Mammary epithelial cell (primary cell): ENCODE measurements at regions of chr6 and their contacts with region 1.

Region 1: GRCh38 chr6:17281100-17281494 is at the start of gene RBM24:
- DNase-seq: peak; percentile 44
- H3K4me3 ChIP-seq: peak within 1 kb of the TSS; percentile 61 to 76 (median 64)
- H3K27ac ChIP-seq: no peak within 1 kb of the TSS
- H3K4me1 ChIP-seq: peaks cover 25% of the 10 kb centered on the region
- H3K27me3 ChIP-seq: no peaks in the 10 kb centered on the region
- CTCF ChIP-seq: peak; percentile 11 to 57
- total RNA-seq, gene RBM24: 0.49 to 4.7 TPM

Region 2: DNA sequence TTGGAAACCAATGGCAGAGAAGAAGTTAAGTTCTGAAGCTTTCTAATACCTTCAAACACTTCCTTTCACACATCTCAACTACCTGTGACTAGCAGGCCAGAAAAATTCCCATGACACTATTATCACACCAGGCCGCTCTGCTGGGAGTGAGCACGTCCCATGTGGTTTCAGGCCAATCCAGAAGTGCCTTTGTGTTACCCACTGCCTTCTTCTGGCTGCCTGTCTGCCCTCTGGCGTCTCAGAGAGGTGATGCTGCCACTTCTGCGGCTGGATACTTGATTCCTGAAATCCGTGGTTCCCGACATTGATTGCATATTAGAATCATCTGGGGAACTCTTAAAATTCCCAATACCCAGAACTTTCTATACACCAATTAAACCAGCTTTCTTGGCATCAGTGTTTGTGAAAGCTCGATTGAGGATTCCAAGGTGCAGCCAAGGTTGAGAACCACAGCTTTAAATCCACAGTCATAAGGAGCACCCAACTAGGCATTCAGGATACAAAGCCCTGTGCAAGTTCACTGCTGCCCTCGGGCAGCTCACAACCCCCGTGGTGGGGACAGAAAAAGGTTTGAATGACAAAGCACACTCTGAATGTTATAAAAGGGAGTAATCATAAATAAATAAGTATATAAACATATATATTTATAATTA is 113.6 kb before region 1 on chr6:
- CTCF ChIA-PET with region 1: no interaction called
- dilution Hi-C with region 1: no loop called
- in situ Hi-C with region 1: no loop called
- intact Hi-C with region 1: loop called (anchors 2 kb)
- DNase-seq: peak; percentile 61
- H3K4me3 ChIP-seq: no peak overlapping the region
- H3K27ac ChIP-seq: no peak overlapping the region
- H3K4me1 ChIP-seq: no peaks in the 10 kb centered on the region
- H3K27me3 ChIP-seq: no peaks in the 10 kb centered on the region
- CTCF ChIP-seq: peak; percentile 29 to 47

Region 3: GRCh38 chr6:17392978-17393891 is 112.1 kb after region 1 on chr6 and contains the start of gene CAP2:
- CTCF ChIA-PET with region 1: no interaction called
- dilution Hi-C with region 1: no loop called
- in situ Hi-C with region 1: no loop called
- intact Hi-C with region 1: loop called (anchors 5 kb)
- DNase-seq: peak; percentile 62
- H3K4me3 ChIP-seq: peak within 1 kb of the TSS; percentile 62 to 73 (median 71)
- H3K27ac ChIP-seq: peak within 1 kb of the TSS; percentile 55
- H3K4me1 ChIP-seq: peaks cover 14% of the 10 kb centered on the region
- H3K27me3 ChIP-seq: no peaks in the 10 kb centered on the region
- CTCF ChIP-seq: peak in 1 of 2 donors; percentile 11
- total RNA-seq, gene CAP2: 7.2 to 8.4 TPM